ENCODE measurements at regions of chr12 and their contacts with region 1.

Region 1: DNA sequence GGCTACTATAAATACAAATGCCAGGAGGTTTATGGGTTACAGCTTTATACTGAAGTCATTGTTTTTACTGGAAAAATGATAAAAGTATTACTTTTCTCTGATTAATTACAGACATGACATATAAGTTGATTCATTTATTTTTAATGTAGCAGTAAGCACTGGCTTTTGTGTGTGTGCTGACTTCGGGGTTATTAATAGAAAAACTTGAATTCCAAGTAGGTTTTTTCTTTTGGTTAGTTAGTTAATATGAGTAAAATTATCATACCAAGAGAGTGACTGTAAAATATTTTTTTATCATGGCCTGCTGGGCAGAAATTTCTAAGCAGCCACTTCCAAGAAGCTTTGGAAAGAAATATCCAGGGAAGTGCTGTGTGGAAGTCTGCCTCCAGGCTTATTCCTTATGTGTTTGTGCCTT is 56.4 kb downstream of the IFT81 start:
- DNase-seq: no peak
- ATAC-seq: no peak
- H3K4me3 ChIP-seq: no peak overlapping the region
- H3K27ac ChIP-seq: peak overlapping the region; percentile 17
- H3K4me1 ChIP-seq: no peaks in the 10 kb centered on the region
- H3K27me3 ChIP-seq: no peaks in the 10 kb centered on the region

Region 2: GRCh38 chr12:110124184-110124995 is 56.2 kb before region 1 on chr12 and contains the start of gene IFT81:
- intact Hi-C with region 1: loop called in 1 of 4 experiments (anchors 10 kb)
- DNase-seq: peak; percentile 95 to 98 (median 98)
- ATAC-seq: peak; percentile 98
- H3K4me3 ChIP-seq: peak within 1 kb of the TSS; percentile 78
- H3K27ac ChIP-seq: peak within 1 kb of the TSS; percentile 85
- H3K4me1 ChIP-seq: peaks cover 2% of the 10 kb centered on the region
- H3K27me3 ChIP-seq: no peaks in the 10 kb centered on the region
- total RNA-seq, gene IFT81: 9.6 to 14.9 (median 11.6) TPM

Region 3: GRCh38 chr12:110149086-110149660 is 31.4 kb before region 1 on chr12:
- intact Hi-C with region 1: no loop called
- DNase-seq: no peak
- ATAC-seq: no peak
- H3K4me3 ChIP-seq: no peak overlapping the region
- H3K27ac ChIP-seq: no peak overlapping the region
- H3K4me1 ChIP-seq: no peaks in the 10 kb centered on the region
- H3K27me3 ChIP-seq: no peaks in the 10 kb centered on the region

Region 4: DNA sequence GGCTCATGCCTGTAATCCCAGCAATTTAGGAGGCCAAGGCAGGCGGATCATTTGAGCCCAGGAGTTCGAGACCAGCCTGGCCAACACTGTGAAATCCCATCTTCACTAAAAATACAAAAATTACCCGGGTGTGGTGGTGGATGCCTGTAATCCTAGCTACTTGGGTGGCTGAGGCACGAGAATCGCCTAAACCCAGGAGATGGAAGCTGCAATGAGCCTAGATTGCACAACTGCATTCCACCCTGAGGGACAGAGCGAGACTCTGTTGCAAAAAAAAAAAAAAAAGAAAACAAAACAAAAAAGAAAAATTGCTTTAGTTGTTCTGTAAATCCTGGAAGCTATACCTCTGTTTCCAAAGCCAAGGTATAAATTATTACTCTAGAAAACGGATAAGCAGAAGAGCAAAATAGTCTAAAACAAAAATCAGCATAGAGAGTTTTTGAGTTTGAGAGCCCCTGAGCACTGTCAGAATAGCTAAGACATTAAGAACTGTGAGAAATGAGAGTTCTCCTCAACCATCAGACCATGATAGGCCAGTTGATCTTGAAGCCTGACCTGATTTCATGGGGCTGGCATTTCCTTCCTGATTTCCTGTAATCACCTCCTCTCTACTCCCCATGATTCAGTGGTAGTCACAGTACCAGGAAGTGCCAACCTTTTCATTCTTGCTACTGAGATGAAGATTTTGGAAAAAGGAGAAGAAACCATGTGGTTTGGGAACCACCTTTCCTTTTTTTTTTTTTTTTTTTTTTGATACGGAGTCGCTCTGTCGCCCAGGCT is 132.2 kb after region 1 on chr12:
- intact Hi-C with region 1: no loop called
- DNase-seq: no peak
- ATAC-seq: peak; percentile 14 to 41
- H3K4me3 ChIP-seq: no peak overlapping the region
- H3K27ac ChIP-seq: no peak overlapping the region
- H3K4me1 ChIP-seq: peaks cover 15% of the 10 kb centered on the region
- H3K27me3 ChIP-seq: no peaks in the 10 kb centered on the region

Region 5: GRCh38 chr12:111993292-111994150 is 1812.9 kb after region 1 on chr12:
- intact Hi-C with region 1: no loop called
- DNase-seq: no peak
- ATAC-seq: no peak
- H3K4me3 ChIP-seq: no peak overlapping the region
- H3K27ac ChIP-seq: no peak overlapping the region
- H3K4me1 ChIP-seq: peaks cover 5% of the 10 kb centered on the region
- H3K27me3 ChIP-seq: no peaks in the 10 kb centered on the region